Heart left ventricle (tissue), 16 donors: ENCODE measurements at regions of chr3 and their contacts with region 1.

Region 1: DNA sequence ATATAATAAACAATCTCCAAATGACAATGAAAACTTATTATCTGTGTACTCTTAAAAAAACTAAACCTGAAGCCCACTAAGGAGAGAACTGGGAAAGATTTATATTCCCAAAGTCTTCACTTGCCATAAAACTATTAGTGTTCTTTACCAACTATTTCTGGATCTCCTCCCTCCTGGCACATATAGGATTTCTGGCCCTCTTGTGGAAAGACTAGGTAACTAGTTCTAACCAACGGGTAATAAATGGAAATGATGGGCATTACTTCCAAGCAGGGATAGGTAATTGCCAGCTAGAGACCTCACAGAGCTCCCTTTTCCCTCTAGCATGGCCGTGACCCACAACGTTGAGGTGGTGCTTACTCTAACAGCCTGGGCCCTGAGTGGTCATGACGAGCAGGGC is 110.1 kb downstream of the DNAH12 start:
- DNase-seq: no peak
- ATAC-seq: no peak
- H3K4me3 ChIP-seq: no peak overlapping the region
- H3K27ac ChIP-seq: no peak overlapping the region
- H3K4me1 ChIP-seq: no peaks in the 10 kb centered on the region
- H3K27me3 ChIP-seq: no peaks in the 10 kb centered on the region
- CTCF ChIP-seq: peak in 8 of 12 donors; percentile 7 to 41 (median 29)
- POLR2A ChIP-seq: no peak

Region 2: DNA sequence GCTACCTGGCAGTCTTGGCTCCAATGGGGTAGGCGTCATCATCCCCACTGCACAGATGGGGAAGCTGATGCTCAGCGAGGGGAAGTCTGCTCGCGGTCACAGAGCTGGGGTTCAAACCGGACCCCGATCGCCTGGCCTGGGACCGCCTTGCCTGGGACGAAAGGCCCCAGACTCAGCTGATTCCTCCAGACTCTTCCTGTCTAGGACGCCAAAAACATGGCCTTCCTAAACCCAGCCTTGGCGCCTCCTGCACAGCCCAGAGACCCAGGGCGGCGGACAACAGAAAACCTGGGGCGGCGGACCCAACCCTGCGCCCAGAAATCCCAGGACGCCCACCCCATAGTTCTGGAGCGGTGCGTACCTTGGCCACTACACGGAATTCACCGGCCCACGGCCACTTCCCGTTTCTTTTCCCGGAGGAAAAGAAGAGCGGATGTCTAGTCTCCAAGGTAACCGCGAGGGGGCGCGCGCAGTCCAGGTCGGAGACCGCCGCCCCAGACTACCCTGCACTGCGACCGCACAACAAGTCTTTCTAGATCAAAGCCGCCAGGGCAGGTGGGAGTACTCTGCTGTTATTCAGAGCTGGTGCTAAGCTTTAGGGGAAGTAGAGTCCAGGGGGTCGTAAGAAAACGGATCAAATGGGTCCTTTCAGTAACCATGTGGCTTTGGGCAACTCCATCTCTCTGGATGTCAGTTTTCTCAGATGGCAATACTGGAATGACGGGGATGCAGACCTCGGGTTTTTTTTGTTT is 264.0 kb before region 1 on chr3:
- intact Hi-C with region 1: loop called in 2 of 10 experiments (anchors 5 to 10 kb)
- DNase-seq: peak; percentile 74 to 88 (median 79)
- ATAC-seq: peak; percentile 62 to 89 (median 80)
- H3K4me3 ChIP-seq: peak overlapping the region; percentile 1 to 64 (median 55)
- H3K27ac ChIP-seq: peak overlapping the region in 5 of 12 donors; percentile 18 to 55 (median 31)
- H3K4me1 ChIP-seq: peaks cover 0 to 17% (median 5%) of the 10 kb centered on the region in 12 donors
- H3K27me3 ChIP-seq: peaks cover 0 to 10% (median 0%) of the 10 kb centered on the region in 9 donors
- CTCF ChIP-seq: peak; percentile 78 to 94 (median 85)
- POLR2A ChIP-seq: no peak

Region 3: GRCh38 chr3:57582474-57583168 is 148.6 kb after region 1 on chr3:
- intact Hi-C with region 1: no loop called
- DNase-seq: no peak
- ATAC-seq: peak in 1 of 4 donors; percentile 33
- H3K4me3 ChIP-seq: no peak overlapping the region
- H3K27ac ChIP-seq: no peak overlapping the region
- H3K4me1 ChIP-seq: peaks cover 0 to 46% (median 23%) of the 10 kb centered on the region in 12 donors
- H3K27me3 ChIP-seq: no peaks in the 10 kb centered on the region
- CTCF ChIP-seq: peak in 2 of 12 donors; percentile 12 to 31
- POLR2A ChIP-seq: no peak

Region 4: DNA sequence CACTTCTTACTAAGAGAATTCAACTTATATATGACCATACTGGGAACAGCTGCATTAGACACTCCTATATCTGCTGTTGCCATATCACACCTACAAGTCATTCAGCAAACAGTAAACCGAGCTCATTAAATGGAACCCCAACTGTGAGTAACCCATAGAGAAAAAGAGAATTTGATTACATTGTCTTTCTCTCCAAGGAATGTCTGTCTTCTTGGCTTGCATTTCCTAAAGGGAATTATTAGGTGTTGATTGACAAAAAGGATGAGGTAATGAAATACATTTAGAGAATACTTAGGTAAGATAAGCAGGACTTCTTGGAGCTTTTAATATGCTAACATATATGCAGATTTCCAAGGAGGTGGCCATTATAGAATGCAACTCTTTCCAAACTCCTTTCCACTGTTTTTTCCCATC is 398.9 kb after region 1 on chr3:
- intact Hi-C with region 1: no loop called
- DNase-seq: no peak
- ATAC-seq: no peak
- H3K4me3 ChIP-seq: no peak overlapping the region
- H3K27ac ChIP-seq: no peak overlapping the region
- H3K4me1 ChIP-seq: peaks cover 0 to 15% (median 0%) of the 10 kb centered on the region in 12 donors
- H3K27me3 ChIP-seq: no peaks in the 10 kb centered on the region
- CTCF ChIP-seq: no peak
- POLR2A ChIP-seq: no peak